ENCODE measurements at regions of chr7 and their contacts with region 1.

Region 1: DNA sequence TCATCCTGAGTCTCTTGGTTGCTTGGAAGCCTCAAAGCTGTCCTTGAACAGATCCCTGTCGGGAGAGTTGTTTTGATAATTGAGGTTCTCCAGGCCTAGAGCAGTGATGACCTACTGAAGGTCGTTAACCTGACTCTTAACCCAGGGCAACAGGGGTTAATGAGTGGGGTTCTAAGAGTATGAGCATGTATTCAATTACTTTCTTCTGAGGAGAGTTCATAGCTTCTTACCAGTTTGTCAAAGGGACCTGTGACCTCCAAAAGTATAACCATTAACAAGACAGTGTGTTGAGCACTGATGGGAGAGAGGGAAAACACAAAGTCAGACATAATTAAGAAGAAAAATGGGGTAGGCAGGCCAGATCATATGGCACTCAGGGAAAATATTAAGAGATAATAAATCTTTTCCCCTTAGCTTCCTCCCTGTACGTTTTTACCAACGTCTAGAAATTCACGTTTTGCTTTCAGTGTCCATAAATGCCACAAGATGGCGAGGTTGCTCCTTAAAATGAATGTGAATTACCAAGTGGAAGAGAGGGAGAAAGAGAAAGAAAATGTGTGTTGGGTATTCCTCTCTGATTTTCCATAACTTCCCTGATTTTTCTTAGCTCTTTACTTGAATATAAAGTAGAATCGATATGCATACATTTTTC is 97.6 kb downstream of the SUGCT start:
- DNase-seq: peak; percentile 62 to 80 (median 75)
- H3K4me3 ChIP-seq: no peak overlapping the region
- H3K27ac ChIP-seq: no peak overlapping the region
- H3K4me1 ChIP-seq: peaks cover 0 to 8% (median 2%) of the 10 kb centered on the region in 4 experiments
- H3K27me3 ChIP-seq: no peaks in the 10 kb centered on the region

Region 2: GRCh38 chr7:40213856-40214255 is 18.5 kb before region 1 on chr7:
- CTCF ChIA-PET with region 1: interaction called, 19 read pairs
- POLR2A ChIA-PET with region 1: no interaction called
- DNase-seq: no peak
- H3K4me3 ChIP-seq: no peak overlapping the region
- H3K27ac ChIP-seq: no peak overlapping the region
- H3K4me1 ChIP-seq: no peaks in the 10 kb centered on the region
- H3K27me3 ChIP-seq: no peaks in the 10 kb centered on the region

Region 3: DNA sequence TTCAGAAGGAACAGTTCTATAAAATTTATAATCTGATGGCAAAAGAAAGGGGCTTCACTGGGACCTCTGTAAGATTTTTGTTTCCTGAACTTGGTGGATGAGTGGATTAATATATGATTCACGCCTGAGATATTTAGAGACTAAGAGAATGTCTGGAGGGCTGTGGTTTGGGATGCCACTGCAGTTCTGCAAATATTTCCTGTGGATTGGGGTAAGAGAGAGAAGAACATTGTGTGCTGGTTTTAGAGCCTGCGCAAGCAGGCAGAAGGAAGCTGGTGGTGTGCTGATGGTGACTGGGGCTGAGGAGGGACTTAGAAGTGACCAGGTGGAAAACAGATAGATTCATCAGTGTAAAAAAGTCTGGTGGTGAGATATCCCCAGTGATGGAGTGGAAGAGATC is 10.5 kb before region 1 on chr7:
- CTCF ChIA-PET with region 1: interaction called, 19 read pairs
- POLR2A ChIA-PET with region 1: no interaction called
- DNase-seq: peak in 2 of 3 donors; percentile 55 to 64
- H3K4me3 ChIP-seq: no peak overlapping the region
- H3K27ac ChIP-seq: no peak overlapping the region
- H3K4me1 ChIP-seq: peaks cover 0 to 12% (median 8%) of the 10 kb centered on the region in 4 experiments
- H3K27me3 ChIP-seq: no peaks in the 10 kb centered on the region

Region 4: DNA sequence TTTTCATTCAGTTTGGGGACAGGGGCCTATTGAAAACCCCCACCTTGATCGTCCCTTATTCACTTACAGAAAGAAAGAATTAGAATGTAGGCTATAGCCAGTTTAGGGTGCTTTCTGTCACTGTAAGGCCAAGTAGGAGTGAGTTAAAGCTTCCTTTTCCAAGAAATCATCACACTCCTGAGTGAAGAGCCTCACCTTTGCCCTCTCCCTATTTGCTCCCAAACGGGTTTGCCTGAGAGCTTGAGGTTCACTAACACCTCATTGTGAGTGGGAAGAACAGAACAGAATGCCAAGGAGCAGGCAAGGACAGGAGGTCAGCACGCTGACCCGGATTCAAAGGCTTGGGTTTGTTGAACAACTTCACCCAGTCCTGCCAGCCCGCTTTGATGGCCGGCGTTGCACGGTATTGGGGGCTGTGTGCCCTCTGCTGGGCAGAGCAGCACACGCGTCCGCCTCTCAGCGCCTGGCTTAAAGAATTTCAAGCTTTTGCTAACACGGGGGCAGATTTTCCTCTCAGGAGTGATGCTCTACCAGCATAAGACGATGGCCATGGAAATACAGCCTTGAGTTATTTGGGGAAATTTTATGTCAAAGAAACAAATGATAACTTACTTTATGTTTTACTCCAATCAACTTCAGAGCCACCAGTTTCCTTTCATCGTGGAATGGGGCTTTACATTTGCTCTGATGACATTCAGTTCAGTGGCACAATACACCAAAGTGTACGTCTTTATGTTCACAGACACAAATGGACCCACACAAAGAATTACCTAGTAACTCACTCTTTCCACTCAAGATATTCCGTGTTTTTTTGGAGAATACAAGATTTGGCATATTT is 372.5 kb after region 1 on chr7:
- CTCF ChIA-PET with region 1: interaction called, 34 read pairs
- POLR2A ChIA-PET with region 1: no interaction called
- DNase-seq: peak; percentile 60 to 71 (median 66)
- H3K4me3 ChIP-seq: no peak overlapping the region
- H3K27ac ChIP-seq: no peak overlapping the region
- H3K4me1 ChIP-seq: peaks cover 5 to 18% (median 12%) of the 10 kb centered on the region in 4 experiments
- H3K27me3 ChIP-seq: no peaks in the 10 kb centered on the region

Region 5: DNA sequence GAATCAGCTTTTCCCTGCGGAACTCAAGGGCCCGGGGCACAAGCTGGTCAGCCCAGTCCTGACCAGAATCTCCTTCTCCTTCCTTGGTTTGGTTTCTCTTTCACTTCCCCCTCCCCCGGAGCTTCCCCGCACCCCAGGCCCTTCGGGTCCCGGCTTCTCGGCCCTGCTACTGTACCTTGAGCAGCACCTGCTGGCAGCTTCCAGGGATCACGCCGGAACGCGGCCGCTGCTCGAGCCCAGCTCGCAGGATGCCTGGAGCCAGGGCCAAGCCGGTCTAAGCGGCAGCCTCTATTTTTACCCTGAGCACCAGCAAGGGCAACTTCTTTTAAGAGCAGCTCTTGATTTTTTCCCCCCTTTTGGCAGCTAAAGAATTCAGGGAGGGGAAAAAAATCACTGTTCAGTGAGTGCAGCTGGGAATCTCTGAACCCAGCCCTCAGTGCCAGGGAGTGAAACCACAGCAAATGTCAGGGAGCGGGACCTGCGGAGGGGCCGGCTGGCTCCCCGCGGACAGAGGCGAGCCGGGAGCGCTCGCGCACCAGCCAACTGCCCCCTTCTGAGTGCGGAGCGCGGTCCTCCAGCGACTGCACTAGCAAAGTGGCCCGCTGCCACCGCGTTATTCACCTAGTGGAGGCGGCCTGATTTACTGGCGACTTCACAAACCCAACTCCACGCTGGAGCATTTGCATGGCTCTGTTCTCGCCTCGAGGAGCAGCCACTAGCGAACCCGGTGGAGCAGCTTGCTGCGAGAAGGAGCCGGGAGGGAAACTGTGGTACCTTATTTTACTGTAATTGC is 1472.9 kb after region 1 on chr7:
- CTCF ChIA-PET with region 1: interaction called, 14 read pairs
- POLR2A ChIA-PET with region 1: no interaction called
- DNase-seq: peak; percentile 86 to 92 (median 92)
- H3K4me3 ChIP-seq: peak overlapping the region; percentile 21 to 89 (median 72)
- H3K27ac ChIP-seq: no peak overlapping the region
- H3K4me1 ChIP-seq: peaks cover 15 to 44% (median 28%) of the 10 kb centered on the region in 4 experiments
- H3K27me3 ChIP-seq: peaks cover 0 to 3% (median 0%) of the 10 kb centered on the region in 5 experiments